ENCODE measurements at regions of chr19 and their contacts with region 1.

Region 1: DNA sequence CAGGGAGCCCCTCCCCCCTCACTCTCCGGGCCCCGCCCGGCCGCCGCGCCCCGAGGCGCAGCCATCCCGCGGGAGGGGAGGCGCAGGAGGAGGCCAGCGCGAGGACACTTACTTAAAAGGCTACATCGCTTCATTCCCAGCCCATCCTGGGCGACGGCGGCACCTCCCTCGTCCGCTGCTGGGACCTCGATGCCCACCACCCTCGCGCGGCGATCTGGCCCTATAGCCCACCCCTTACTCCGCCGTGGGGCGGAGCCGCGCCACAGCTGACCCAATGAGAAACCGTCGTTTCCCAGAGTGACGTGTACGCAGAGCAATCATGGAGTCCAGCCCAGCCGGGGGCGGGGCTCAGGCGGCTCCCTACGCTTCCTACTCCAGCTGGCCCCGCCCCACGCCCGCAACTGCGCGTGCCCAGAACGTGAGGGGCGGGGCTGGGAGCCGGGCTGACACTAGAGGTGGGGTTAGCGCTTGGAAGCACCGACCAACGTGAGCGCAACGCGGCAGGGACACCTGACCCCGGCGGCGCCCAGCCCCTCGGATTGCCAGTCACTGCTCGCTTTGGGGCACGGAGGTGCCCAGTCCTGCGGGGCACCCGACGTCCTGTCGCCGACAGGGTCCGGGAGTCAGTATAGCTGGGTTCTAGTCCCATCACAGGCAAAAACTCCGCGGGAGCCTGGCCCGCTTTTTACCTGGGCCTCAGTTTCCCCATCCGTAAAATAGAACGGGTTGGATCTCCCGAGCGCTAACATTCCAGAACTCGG is at the start of gene ANKRD27:
- DNase-seq: peak; percentile 99
- ATAC-seq: peak; percentile 92 to 97 (median 94)
- H3K4me3 ChIP-seq: peak within 1 kb of the TSS; percentile 54
- H3K4me3 Mint-ChIP-seq: peak within 1 kb of the TSS; percentile 99
- H3K27ac ChIP-seq: peak within 1 kb of the TSS; percentile 63
- H3K27ac Mint-ChIP-seq: peak within 1 kb of the TSS; percentile 79 to 84
- H3K4me1 ChIP-seq: peaks cover 57% of the 10 kb centered on the region
- H3K4me1 Mint-ChIP-seq: peaks cover 34 to 50% of the 10 kb centered on the region in 2 donors
- H3K27me3 ChIP-seq: peaks cover 7% of the 10 kb centered on the region
- H3K27me3 Mint-ChIP-seq: peaks cover 8 to 11% of the 10 kb centered on the region in 2 donors
- CTCF ChIP-seq: no peak
- total RNA-seq, gene ANKRD27: 35.8 to 47.1 (median 40.8) TPM

Region 2: DNA sequence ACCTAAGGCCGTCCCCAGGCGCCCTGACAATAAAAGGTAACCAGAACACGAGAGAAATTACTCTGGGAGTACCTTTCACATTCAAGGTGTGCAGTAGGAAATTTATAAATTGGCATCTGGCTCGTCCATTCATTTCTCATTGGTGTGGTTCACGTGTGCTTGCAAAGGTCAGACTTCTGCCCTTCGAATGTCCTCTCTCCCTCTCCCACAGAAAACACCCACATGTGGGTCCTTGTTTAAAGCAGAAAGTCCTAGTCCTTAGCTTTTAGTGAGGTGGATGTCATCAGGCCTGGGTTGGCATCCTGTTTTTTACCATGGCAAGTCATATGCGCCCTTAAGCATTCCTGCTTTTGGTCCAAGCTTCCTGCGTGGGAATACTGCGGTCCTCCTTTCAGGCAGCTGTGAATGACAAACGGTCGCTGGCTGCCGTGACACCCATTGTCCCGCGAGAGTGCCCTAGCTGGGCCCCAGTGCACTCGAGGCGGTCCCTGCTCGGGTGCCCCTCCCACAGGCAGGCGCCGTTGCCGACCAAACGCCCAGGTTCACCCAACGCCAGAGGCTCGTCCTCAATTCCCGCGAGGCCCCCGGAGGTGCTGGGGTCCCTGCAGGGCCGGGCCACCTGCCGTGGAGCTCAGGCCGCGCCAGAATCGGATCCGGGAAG is 16.3 kb after region 1 on chr19 and contains the start of gene NUDT19:
- intact Hi-C with region 1: loop called (anchors 2 kb)
- DNase-seq: peak; percentile 59 to 82
- ATAC-seq: peak; percentile 72 to 77 (median 76)
- H3K4me3 ChIP-seq: peak within 1 kb of the TSS; percentile 55
- H3K4me3 Mint-ChIP-seq: peak within 1 kb of the TSS; percentile 94
- H3K27ac ChIP-seq: peak within 1 kb of the TSS; percentile 57
- H3K27ac Mint-ChIP-seq: peak within 1 kb of the TSS; percentile 88 to 90
- H3K4me1 ChIP-seq: peaks cover 49% of the 10 kb centered on the region
- H3K4me1 Mint-ChIP-seq: peaks cover 49% of the 10 kb centered on the region in 2 donors
- H3K27me3 ChIP-seq: no peaks in the 10 kb centered on the region
- H3K27me3 Mint-ChIP-seq: no peaks in the 10 kb centered on the region
- CTCF ChIP-seq: no peak
- total RNA-seq, gene NUDT19: 6.4 to 9.6 (median 8.2) TPM

Region 3: GRCh38 chr19:32971715-32972540 is 296.8 kb after region 1 on chr19 and contains the starts of genes CEP89 and FAAP24:
- intact Hi-C with region 1: loop called (anchors 1 kb)
- DNase-seq: peak; percentile 97 to 99
- ATAC-seq: peak; percentile 98 to 99 (median 98)
- H3K4me3 ChIP-seq: peak within 1 kb of the TSS; percentile 67
- H3K4me3 Mint-ChIP-seq: peak within 1 kb of the TSS; percentile 99
- H3K27ac ChIP-seq: peak within 1 kb of the TSS; percentile 85
- H3K27ac Mint-ChIP-seq: peak within 1 kb of the TSS; percentile 91 to 94
- H3K4me1 ChIP-seq: peaks cover 14% of the 10 kb centered on the region
- H3K4me1 Mint-ChIP-seq: peaks cover 0 to 16% of the 10 kb centered on the region in 2 donors
- H3K27me3 ChIP-seq: no peaks in the 10 kb centered on the region
- H3K27me3 Mint-ChIP-seq: no peaks in the 10 kb centered on the region
- CTCF ChIP-seq: no peak
- total RNA-seq, gene CEP89: 7.6 to 12.0 (median 10.3) TPM
- total RNA-seq, gene FAAP24: 1.8 to 4.1 (median 2.3) TPM

Region 4: GRCh38 chr19:33064792-33065550 is 389.8 kb after region 1 on chr19 and contains the start of gene RHPN2:
- intact Hi-C with region 1: loop called (anchors 5 kb)
- DNase-seq: peak in 1 of 2 donors; percentile 52
- ATAC-seq: peak in 2 of 3 donors; percentile 37 to 68
- H3K4me3 ChIP-seq: peak within 1 kb of the TSS; percentile 10
- H3K4me3 Mint-ChIP-seq: peak within 1 kb of the TSS; percentile 66
- H3K27ac ChIP-seq: no peak within 1 kb of the TSS
- H3K27ac Mint-ChIP-seq: no peak within 1 kb of the TSS
- H3K4me1 ChIP-seq: peaks cover 7% of the 10 kb centered on the region
- H3K4me1 Mint-ChIP-seq: peaks cover 0 to 4% of the 10 kb centered on the region in 2 donors
- H3K27me3 ChIP-seq: peaks cover 11% of the 10 kb centered on the region
- H3K27me3 Mint-ChIP-seq: peaks cover 18 to 31% of the 10 kb centered on the region in 2 donors
- CTCF ChIP-seq: no peak
- total RNA-seq, gene RHPN2: 0.35 TPM in 1 of 3 donors, not detected in the others